Naive thymus-derived CD4-positive, alpha-beta T cell (primary cell): ENCODE measurements at regions of chr3 and their contacts with region 1.

Region 1: GRCh38 chr3:11719406-11720230 is 75.9 kb upstream of the VGLL4 start:
- DNase-seq: peak; percentile 58 to 77 (median 67)
- ATAC-seq: peak; percentile 86
- H3K4me3 ChIP-seq: peak overlapping the region; percentile 74
- H3K4me3 Mint-ChIP-seq: peak overlapping the region; percentile 59 to 95 (median 82)
- H3K27ac ChIP-seq: peak overlapping the region; percentile 75
- H3K27ac Mint-ChIP-seq: peak overlapping the region in 1 of 9 donors; percentile 62
- H3K4me1 ChIP-seq: peaks cover 6 to 8% of the 10 kb centered on the region in 2 donors
- H3K4me1 Mint-ChIP-seq: peaks cover 14 to 30% (median 20%) of the 10 kb centered on the region in 7 donors
- H3K27me3 ChIP-seq: no peaks in the 10 kb centered on the region
- H3K27me3 Mint-ChIP-seq: peaks cover 2 to 34% (median 10%) of the 10 kb centered on the region in 5 donors

Region 2: GRCh38 chr3:11785024-11785377 is 65.4 kb after region 1 on chr3:
- CTCF ChIA-PET with region 1: no interaction called
- POLR2A ChIA-PET with region 1: no interaction called
- intact Hi-C with region 1: loop called in 1 of 2 experiments (anchors 1 kb)
- DNase-seq: peak in 6 of 9 donors; percentile 21 to 48 (median 34)
- ATAC-seq: peak; percentile 76
- H3K4me3 ChIP-seq: no peak overlapping the region
- H3K4me3 Mint-ChIP-seq: peak overlapping the region in 8 of 10 donors; percentile 26 to 86 (median 59)
- H3K27ac ChIP-seq: no peak overlapping the region
- H3K27ac Mint-ChIP-seq: peak overlapping the region in 7 of 9 donors; percentile 53 to 99 (median 82)
- H3K4me1 ChIP-seq: peaks cover 3 to 9% of the 10 kb centered on the region in 2 donors
- H3K4me1 Mint-ChIP-seq: peaks cover 10 to 27% (median 22%) of the 10 kb centered on the region in 7 donors
- H3K27me3 ChIP-seq: no peaks in the 10 kb centered on the region
- H3K27me3 Mint-ChIP-seq: no peaks in the 10 kb centered on the region